Activated naive CD4-positive, alpha-beta T cell treated with anti-CD3 and anti-CD28 coated beads for 36 hours (primary cell): ENCODE measurements at regions of chr5 and their contacts with region 1.

Region 1: GRCh38 chr5:81301271-81302015 is at the start of gene ZCCHC9:
- DNase-seq: peak; percentile 96
- H3K4me3 Mint-ChIP-seq: peak within 1 kb of the TSS; percentile 87
- H3K27ac Mint-ChIP-seq: peak within 1 kb of the TSS; percentile 88
- H3K4me1 Mint-ChIP-seq: peaks cover 44% of the 10 kb centered on the region
- H3K27me3 Mint-ChIP-seq: no peaks in the 10 kb centered on the region
- total RNA-seq, gene ZCCHC9: 31.8 to 33.5 TPM

Region 2: DNA sequence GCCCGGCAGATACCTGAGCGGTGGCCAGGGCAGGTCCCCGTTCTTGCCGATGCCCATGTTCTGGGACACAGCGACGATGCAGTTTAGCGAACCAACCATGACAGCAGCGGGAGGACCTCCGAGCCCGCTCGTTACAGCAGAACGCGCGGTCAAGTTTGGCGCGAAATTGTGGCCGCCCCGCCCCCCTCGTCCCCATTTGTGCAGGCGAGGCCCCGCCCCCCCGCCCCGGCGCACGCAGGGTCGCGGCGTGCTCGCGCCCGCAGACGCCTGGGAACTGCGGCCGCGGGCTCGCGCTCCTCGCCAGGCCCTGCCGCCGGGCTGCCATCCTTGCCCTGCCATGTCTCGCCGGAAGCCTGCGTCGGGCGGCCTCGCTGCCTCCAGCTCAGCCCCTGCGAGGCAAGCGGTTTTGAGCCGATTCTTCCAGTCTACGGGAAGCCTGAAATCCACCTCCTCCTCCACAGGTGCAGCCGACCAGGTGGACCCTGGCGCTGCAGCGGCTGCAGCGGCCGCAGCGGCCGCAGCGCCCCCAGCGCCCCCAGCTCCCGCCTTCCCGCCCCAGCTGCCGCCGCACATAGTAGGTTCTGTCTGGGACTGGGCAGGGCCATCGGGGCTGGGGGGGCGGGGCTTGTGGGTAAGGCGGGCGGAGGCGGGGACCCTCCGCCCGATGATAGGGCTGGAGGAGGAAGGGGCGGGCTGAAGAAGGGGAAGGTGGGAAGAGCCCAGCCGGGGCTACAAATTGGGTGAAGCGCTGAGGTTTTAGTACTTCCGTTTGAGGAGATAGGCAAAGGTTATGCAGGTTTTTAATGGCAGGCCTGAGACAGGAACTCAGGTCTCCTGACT is 646.8 kb before region 1 on chr5 and contains the starts of genes DHFR and MSH3:
- CTCF ChIA-PET with region 1: no interaction called
- intact Hi-C with region 1: loop called (anchors 1 kb)
- DNase-seq: peak; percentile 95
- H3K4me3 Mint-ChIP-seq: peak within 1 kb of the TSS; percentile 95
- H3K27ac Mint-ChIP-seq: peak within 1 kb of the TSS; percentile 99
- H3K4me1 Mint-ChIP-seq: peaks cover 25% of the 10 kb centered on the region
- H3K27me3 Mint-ChIP-seq: no peaks in the 10 kb centered on the region
- total RNA-seq, gene DHFR: 107 to 112 TPM
- total RNA-seq, gene MSH3: 25.1 to 25.8 TPM

Region 3: DNA sequence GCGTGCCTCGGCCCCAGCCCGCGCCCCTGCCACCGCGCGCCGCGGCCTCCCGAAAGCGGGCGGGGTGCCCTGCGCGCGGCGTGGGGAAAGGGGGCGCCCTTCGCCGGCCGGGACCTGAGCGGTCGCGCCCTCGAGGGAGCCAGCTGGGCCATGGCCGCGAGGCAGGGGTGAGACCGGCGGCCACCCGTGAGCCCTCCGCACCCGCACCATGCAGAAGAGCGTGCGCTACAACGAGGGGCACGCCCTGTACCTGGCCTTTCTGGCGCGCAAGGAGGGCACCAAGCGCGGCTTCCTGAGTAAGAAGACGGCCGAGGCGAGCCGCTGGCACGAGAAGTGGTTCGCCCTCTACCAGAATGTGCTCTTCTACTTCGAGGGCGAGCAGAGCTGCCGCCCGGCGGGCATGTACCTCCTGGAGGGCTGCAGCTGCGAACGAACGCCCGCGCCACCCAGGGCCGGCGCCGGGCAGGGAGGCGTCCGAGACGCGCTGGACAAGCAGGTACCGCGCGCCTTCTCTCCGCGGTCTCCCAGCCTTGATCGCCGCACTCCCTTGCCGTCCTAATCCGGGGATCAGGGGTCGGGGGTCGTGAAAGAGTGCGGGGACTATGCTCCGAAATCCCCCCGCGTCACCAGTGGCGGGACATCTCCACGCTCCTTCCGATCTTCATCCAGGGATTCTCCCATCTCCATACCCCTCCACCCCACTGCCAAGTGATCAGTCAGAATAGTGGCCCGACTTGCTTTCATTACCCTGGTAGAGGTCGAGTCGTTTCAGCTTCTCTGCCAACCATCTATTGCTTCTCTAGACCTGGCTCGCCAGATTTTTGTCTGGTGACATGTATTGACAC is 340.7 kb before region 1 on chr5:
- CTCF ChIA-PET with region 1: no interaction called
- intact Hi-C with region 1: loop called (anchors 1 kb)
- DNase-seq: peak; percentile 49
- H3K4me3 Mint-ChIP-seq: peak overlapping the region; percentile 80
- H3K27ac Mint-ChIP-seq: peak overlapping the region; percentile 61
- H3K4me1 Mint-ChIP-seq: peaks cover 59% of the 10 kb centered on the region
- H3K27me3 Mint-ChIP-seq: no peaks in the 10 kb centered on the region

Region 4: GRCh38 chr5:81420039-81420667 is 118.7 kb after region 1 on chr5:
- CTCF ChIA-PET with region 1: no interaction called
- intact Hi-C with region 1: loop called (anchors 2 kb)
- DNase-seq: peak; percentile 36
- H3K4me3 Mint-ChIP-seq: no peak overlapping the region
- H3K27ac Mint-ChIP-seq: no peak overlapping the region
- H3K4me1 Mint-ChIP-seq: peaks cover 13% of the 10 kb centered on the region
- H3K27me3 Mint-ChIP-seq: no peaks in the 10 kb centered on the region

Region 5: DNA sequence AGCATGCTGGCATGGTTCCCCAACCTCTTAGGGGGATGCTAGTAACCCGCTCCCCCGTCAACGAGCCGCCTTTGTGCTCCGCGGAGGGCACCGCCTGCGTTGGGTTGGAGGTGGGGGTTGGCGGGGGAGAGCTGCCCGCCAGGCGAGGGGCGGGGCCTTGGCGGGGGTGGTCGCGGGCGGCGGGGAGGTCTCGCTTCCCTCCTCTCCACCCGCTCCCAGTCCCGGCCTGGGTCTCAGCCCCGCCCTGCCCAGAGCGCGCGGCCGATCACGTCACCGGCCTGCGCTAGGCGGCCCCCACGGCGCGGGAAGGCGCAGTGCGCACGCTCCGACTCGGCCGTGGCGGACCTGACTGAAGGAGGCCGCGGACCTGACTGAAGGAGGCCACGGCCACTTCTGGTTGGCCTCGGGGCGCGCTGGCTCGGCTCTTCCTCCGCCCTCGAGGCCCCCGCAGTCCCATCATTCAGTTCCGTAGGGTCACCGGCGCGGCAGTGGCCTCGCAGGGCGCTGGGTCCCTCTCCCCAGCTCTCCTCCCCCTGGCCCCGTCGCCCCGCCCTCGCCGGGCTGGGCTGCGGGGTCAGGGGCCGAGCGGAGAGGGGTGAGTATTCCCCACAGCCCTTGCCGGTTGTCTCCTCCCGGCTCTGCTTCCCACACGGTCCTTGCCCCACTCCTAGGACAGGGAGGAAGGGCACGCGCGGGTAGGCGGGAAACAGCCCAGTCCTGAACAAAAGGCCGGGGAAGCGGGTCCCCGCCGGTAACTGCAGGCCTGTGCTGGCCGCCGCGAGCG is 670.5 kb after region 1 on chr5 and contains the start of gene ATG10:
- CTCF ChIA-PET with region 1: no interaction called
- intact Hi-C with region 1: loop called (anchors 1 kb)
- DNase-seq: peak; percentile 86
- H3K4me3 Mint-ChIP-seq: peak within 1 kb of the TSS; percentile 94
- H3K27ac Mint-ChIP-seq: peak within 1 kb of the TSS; percentile 98
- H3K4me1 Mint-ChIP-seq: peaks cover 22% of the 10 kb centered on the region
- H3K27me3 Mint-ChIP-seq: no peaks in the 10 kb centered on the region
- total RNA-seq, gene ATG10: 7.2 to 8.0 TPM

Region 6: DNA sequence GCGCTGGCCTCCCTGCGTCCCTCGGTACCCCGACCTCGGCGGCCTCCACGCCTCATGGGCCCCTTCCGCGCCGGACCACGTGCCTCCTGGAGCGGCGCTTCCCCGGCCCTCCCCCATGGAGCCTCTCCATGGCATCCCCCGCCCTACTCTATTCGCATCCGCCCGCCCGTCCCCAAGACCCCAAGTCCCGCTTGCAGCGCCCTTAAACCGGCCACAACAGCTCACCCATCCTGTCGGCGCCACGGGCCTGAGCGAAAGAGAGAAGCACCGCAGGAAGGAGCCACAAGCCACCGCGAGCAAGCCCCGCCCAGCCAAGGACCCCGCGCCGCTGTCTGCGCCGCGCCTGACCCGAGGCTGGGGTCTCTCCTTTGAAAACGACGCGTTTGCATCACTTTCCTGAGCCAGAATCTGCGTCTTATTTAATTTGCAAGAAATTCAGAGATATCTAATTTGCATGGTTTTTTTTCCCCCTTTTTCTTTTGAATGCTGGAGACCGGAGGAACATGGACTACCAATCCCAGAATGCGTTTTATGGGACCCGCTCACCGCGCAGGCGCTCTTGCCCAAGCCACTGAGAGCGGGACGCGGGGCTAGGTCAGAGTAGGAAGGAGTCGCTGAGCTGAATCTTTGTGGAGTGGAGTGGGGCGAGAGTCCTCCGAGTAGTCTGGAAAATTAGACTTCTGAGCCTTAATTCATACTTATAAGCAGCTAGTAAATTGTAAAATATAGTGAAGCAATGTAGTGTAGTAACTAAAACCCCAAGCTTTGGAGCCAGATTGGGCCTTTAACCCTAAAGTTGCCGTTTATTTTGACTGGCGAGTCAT is 976.9 kb after region 1 on chr5 and contains the start of gene RPS23:
- CTCF ChIA-PET with region 1: no interaction called
- intact Hi-C with region 1: loop called (anchors 1 kb)
- DNase-seq: peak; percentile 93
- H3K4me3 Mint-ChIP-seq: peak within 1 kb of the TSS; percentile 95
- H3K27ac Mint-ChIP-seq: peak within 1 kb of the TSS; percentile 99
- H3K4me1 Mint-ChIP-seq: peaks cover 38% of the 10 kb centered on the region
- H3K27me3 Mint-ChIP-seq: no peaks in the 10 kb centered on the region
- total RNA-seq, gene RPS23: 3,081 to 3,109 TPM